ENCODE measurements at regions of chr1 and their contacts with region 1.

Region 1: DNA sequence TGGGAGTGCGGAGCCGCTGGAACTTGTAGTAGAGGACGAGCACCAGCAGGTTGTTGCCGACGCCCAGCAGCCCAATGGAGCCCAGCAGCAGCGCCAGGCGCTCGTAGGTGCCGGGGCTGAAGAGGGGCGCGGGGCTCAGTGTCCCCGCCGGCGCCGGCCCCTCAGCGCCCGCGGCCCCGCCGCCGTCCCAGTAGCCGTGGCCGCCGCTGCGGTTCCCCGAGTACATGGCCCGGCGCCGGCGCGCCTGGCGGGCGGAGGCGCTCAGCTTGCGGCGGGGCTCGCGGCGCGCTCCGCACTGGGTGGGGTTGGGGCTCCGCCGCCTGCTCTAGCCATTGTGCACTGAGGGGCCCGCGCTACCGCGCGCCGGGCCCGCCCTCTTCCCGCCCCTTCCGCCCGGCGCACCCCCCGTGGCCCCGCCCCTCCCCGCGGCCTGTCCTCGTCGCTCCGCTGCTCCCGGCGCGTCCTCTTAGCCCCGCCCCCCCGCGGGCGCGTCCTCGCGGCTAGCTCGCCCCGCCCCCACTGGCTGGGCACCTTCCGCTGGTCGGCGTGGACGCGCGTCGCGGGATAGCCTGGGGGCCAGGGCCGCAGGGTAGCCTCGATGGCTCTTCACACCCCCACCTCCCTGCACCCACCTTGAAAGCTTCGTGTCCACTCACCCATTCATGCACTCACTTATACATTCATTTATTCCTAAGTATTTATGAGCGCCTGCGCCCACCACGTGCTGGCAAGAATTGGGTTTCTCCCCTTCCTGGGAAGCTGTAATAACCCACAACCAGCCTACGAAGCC is at the starts of genes CHML and OPN3:
- DNase-seq: peak; percentile 33
- H3K4me3 ChIP-seq: peak within 1 kb of the TSS; percentile 98
- H3K27me3 ChIP-seq: no peaks in the 10 kb centered on the region
- CTCF ChIP-seq: no peak
- polyA plus RNA-seq, gene CHML: 8.4 and 10.1 TPM in 2 replicates
- polyA plus RNA-seq, gene OPN3: 14.1 and 21.9 TPM in 2 replicates

Region 2: DNA sequence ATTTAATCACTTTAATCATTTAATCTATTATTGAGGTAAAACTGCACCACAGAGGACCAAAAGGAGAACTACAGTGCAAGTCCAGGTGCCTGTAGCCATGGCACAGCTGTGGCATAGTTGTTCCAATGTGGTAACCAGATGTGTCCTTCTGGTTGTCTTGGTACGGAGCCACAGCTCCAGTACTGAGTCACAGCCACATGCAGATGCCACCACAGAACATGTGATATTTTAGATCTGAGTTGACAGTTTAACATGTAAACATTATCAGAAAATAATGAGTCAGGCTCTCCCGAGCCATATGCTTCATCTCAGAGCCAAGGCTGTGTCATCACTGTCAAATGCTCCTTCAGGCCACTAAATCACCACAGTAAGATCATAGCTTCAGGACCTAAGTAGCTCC is 226.8 kb before region 1 on chr1:
- CTCF ChIA-PET with region 1: no interaction called
- POLR2A ChIA-PET with region 1: no interaction called
- DNase-seq: peak; percentile 90
- H3K4me3 ChIP-seq: no peak overlapping the region
- H3K27me3 ChIP-seq: no peaks in the 10 kb centered on the region
- CTCF ChIP-seq: no peak

Region 3: GRCh38 chr1:241627453-241628259 is 12.6 kb before region 1 on chr1:
- CTCF ChIA-PET with region 1: interaction called, 11 read pairs
- POLR2A ChIA-PET with region 1: no interaction called
- DNase-seq: no peak
- H3K4me3 ChIP-seq: no peak overlapping the region
- H3K27me3 ChIP-seq: no peaks in the 10 kb centered on the region
- CTCF ChIP-seq: peak; percentile 71

Region 4: DNA sequence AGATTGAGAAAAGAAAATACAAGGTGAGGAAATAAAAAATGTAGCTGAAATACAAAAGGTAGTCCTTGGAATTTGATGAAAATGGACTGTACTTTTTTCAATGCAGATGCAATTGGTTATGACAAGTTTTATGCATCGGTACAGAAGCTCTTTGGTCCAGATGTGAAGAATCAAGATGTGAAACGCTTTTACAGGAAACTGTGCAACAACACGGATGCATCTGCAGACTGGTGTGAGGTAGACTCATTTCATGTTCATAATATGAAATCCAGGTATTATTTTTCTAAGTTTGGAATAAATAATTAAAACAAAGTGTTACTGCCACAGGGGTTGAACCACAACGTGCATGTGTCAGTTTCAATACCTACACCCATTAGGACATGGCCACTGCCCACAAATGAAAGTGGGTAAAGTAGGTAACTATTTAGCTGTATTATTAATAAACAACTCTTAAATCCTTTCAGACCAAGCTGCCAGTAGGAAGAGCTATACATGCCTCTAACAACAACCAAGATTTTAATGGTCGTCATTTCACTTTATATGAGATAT is 20.3 kb after region 1 on chr1:
- CTCF ChIA-PET with region 1: no interaction called
- POLR2A ChIA-PET with region 1: no interaction called
- DNase-seq: no peak
- H3K4me3 ChIP-seq: no peak overlapping the region
- H3K27me3 ChIP-seq: no peaks in the 10 kb centered on the region
- CTCF ChIP-seq: no peak

Region 5: GRCh38 chr1:241672301-241672700 is 32.1 kb after region 1 on chr1:
- CTCF ChIA-PET with region 1: no interaction called
- POLR2A ChIA-PET with region 1: interaction called, 15 read pairs
- DNase-seq: no peak
- H3K4me3 ChIP-seq: no peak overlapping the region
- H3K27me3 ChIP-seq: no peaks in the 10 kb centered on the region
- CTCF ChIP-seq: no peak

Measured in BJ (cell line).